CD14-positive monocyte (primary cell): ENCODE measurements at regions of chr2 and their contacts with region 1.

Region 1: DNA sequence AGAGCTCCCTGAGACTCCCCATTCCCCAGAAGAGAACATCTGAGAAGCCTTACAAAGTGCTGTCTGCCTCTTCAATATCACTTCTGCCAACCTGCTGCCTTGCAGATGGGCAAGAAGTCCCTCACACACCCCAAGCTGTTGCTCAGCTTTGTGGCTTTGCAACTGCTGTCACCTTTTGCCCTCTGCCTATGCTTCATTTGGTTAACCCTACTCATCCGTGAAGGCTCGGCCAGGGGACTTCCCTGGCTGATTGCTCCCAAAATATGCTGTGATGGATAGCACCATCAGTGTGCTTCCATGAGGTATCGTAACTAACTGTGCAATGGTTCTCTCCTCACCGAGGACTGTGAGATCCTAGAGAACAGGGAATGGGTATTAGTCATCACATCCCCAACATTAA is 88.9 kb upstream of the CYP1B1 start:
- DNase-seq: no peak
- H3K4me3 ChIP-seq: no peak overlapping the region
- H3K4me3 Mint-ChIP-seq: peak overlapping the region in 1 of 2 donors; percentile 31
- H3K27ac ChIP-seq: no peak overlapping the region
- H3K27ac Mint-ChIP-seq: peak overlapping the region in 2 of 7 donors; percentile 29 to 50
- H3K4me1 ChIP-seq: peaks cover 26 to 35% of the 10 kb centered on the region in 2 donors
- H3K4me1 Mint-ChIP-seq: peaks cover 48% of the 10 kb centered on the region
- H3K27me3 ChIP-seq: no peaks in the 10 kb centered on the region
- H3K27me3 Mint-ChIP-seq: peaks cover 0 to 10% (median 5%) of the 10 kb centered on the region in 3 donors
- CTCF ChIP-seq: no peak

Region 2: DNA sequence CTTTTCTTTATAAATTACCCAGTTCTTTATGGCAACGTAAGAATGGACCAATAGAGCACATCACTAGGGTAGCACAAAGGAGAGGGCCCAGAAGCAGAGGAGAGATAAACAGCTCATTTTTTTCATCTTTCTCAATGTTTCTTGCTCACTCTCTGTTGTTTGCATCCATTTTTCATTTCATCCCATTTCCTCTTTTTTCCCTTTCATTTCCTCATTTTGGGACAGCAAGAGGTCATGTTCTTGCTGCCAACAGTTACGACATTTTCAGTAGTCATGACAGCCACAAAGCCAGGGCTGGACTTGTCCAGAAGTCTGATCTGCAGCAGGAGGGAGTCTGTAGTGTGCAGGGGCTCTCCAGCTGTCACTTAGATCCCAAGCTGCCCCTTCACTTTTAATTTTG is 36.2 kb before region 1 on chr2:
- intact Hi-C with region 1: no loop called
- DNase-seq: peak; percentile 94 to 98 (median 95)
- H3K4me3 ChIP-seq: no peak overlapping the region
- H3K4me3 Mint-ChIP-seq: peak overlapping the region in 1 of 2 donors; percentile 30
- H3K27ac ChIP-seq: peak overlapping the region; percentile 93
- H3K27ac Mint-ChIP-seq: peak overlapping the region; percentile 94 to 99 (median 99)
- H3K4me1 ChIP-seq: peaks cover 69 to 82% of the 10 kb centered on the region in 2 donors
- H3K4me1 Mint-ChIP-seq: peaks cover 79% of the 10 kb centered on the region
- H3K27me3 ChIP-seq: no peaks in the 10 kb centered on the region
- H3K27me3 Mint-ChIP-seq: peaks cover 0 to 5% (median 0%) of the 10 kb centered on the region in 3 donors
- CTCF ChIP-seq: no peak

Region 3: DNA sequence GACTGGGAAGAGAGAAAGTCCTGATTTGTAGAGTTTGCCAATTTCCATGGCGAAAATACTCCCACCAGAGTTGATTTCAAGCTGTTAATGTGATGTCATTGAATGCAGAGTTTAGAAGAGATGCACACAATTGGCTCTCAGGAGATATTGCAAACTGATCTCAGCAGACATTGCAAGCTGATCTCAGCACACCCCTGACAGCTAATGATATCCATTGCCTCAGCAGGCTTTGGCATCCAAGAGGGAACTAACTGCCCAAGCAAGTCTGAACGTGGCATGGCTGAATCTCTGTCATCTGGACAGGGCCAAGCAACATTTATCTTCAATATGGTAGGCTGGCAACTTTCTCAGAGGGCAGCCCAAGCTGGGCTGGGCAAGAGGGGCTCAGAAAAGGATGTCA is 10.5 kb before region 1 on chr2:
- intact Hi-C with region 1: loop called in 1 of 2 experiments (anchors 2 kb)
- DNase-seq: no peak
- H3K4me3 ChIP-seq: no peak overlapping the region
- H3K4me3 Mint-ChIP-seq: no peak overlapping the region
- H3K27ac ChIP-seq: no peak overlapping the region
- H3K27ac Mint-ChIP-seq: peak overlapping the region in 4 of 7 donors; percentile 8 to 73 (median 53)
- H3K4me1 ChIP-seq: peaks cover 33 to 53% of the 10 kb centered on the region in 2 donors
- H3K4me1 Mint-ChIP-seq: peaks cover 45% of the 10 kb centered on the region
- H3K27me3 ChIP-seq: no peaks in the 10 kb centered on the region
- H3K27me3 Mint-ChIP-seq: peaks cover 0 to 3% (median 1%) of the 10 kb centered on the region in 3 donors
- CTCF ChIP-seq: no peak

Region 4: DNA sequence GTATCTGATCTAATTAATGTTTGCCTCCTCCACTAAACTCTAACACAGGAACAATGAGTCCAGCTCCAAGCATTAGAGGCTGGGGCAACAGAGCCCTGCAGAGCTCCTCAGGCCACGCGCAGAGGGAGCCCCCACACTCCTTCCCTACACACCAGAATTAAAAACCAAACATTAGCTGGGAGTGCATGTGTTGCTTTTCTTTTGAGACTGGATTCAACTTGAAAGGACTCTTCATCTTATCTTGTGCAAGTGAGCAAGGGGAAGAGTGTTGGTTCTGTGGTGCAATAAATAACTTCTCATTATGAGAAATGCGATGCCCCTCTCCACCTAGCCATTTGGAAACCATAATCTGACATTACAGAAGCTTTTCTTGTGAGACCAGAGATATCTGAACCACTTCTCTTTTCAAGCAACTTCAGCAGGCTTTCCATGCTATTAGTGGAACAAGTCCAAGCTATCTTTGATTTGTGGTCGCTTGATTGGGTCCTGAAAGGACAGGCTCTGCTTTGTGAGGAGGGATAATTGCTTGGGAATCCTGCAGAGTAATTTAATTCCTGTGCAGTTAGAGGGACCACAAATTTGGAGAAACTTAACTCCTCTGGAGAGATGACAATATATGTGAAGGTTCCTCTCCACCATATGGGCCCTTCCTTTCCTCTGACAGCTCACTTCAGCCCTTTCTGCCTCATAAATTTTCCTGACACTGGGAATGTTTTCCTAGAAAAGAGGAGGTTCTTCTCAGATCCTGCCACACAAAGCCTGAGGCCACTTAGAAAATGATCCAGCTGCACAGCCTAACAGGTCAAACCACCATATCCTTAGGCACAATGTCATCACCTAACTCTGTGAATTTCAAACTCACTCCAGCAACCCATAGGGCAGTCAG is 99.8 kb after region 1 on chr2:
- intact Hi-C with region 1: loop called in 1 of 2 experiments (anchors 10 kb)
- DNase-seq: peak; percentile 54 to 71 (median 60)
- H3K4me3 ChIP-seq: no peak overlapping the region
- H3K4me3 Mint-ChIP-seq: peak overlapping the region in 1 of 2 donors; percentile 46
- H3K27ac ChIP-seq: peak overlapping the region; percentile 65 to 72
- H3K27ac Mint-ChIP-seq: peak overlapping the region; percentile 77 to 94 (median 88)
- H3K4me1 ChIP-seq: peaks cover 62 to 80% of the 10 kb centered on the region in 2 donors
- H3K4me1 Mint-ChIP-seq: peaks cover 79% of the 10 kb centered on the region
- H3K27me3 ChIP-seq: no peaks in the 10 kb centered on the region
- H3K27me3 Mint-ChIP-seq: peaks cover 0 to 2% (median 2%) of the 10 kb centered on the region in 3 donors
- CTCF ChIP-seq: no peak